Activated CD8-positive, alpha-beta memory T cell treated with anti-CD3 and anti-CD28 coated beads, Interleukin-2, amount 10 ng/mL, durations not matched to agents 7 days and 5 days (primary cell): ENCODE measurements at regions of chr5 and their contacts with region 1.

Region 1: GRCh38 chr5:177113566-177114424 is 19.8 kb upstream of the NSD1 start:
- DNase-seq: peak; percentile 86
- ATAC-seq: peak; percentile 60
- H3K4me3 Mint-ChIP-seq: no peak overlapping the region
- H3K27ac Mint-ChIP-seq: peak overlapping the region; percentile 60
- H3K4me1 Mint-ChIP-seq: peaks cover 30% of the 10 kb centered on the region
- H3K27me3 Mint-ChIP-seq: no peaks in the 10 kb centered on the region

Region 2: GRCh38 chr5:176995896-176996754 is 117.7 kb before region 1 on chr5:
- CTCF ChIA-PET with region 1: no interaction called
- DNase-seq: no peak
- ATAC-seq: peak; percentile 68
- H3K4me3 Mint-ChIP-seq: no peak overlapping the region
- H3K27ac Mint-ChIP-seq: peak overlapping the region; percentile 17
- H3K4me1 Mint-ChIP-seq: peaks cover 28% of the 10 kb centered on the region
- H3K27me3 Mint-ChIP-seq: no peaks in the 10 kb centered on the region

Region 3: DNA sequence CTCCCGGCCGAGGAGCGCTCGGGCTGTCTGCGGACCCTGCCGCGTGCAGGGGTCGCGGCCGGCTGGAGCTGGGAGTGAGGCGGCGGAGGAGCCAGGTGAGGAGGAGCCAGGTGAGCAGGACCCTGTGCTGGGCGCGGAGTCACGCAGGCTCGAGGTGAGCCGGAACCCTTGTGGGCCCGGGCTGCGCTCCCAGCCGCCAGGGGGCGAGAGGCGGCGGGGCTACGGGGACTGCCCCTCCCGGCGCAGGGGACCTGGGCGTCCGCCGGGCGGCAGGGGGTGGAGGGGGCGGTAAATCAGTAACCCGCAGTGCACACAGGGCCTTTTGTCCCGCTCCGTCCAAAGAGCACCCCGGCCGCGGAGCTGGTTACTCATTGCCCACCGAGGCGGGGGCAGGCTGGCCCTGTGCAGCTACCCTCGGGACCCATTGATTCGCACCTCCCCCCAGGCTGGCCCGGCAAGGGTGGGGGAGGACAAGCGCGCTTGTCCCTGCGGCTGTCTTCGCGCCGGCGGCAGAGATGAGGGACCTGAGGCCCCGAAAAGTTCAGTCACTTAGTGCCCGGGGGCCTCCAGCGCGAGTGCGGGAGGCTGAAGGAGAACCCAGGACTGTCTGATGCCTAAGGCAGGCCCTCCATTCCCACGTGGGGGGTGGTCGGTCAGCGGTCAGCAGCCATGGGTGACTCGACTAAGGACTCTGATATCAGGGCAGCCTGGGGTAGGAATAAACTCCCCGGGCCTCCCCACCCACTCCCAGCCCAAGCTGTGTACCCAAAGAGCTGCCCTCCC is 26.7 kb before region 1 on chr5:
- CTCF ChIA-PET with region 1: interaction called, 40 read pairs
- DNase-seq: peak; percentile 65
- ATAC-seq: peak; percentile 85
- H3K4me3 Mint-ChIP-seq: no peak overlapping the region
- H3K27ac Mint-ChIP-seq: no peak overlapping the region
- H3K4me1 Mint-ChIP-seq: peaks cover 9% of the 10 kb centered on the region
- H3K27me3 Mint-ChIP-seq: peaks cover 45% of the 10 kb centered on the region

Region 4: GRCh38 chr5:177133091-177133852 is 19.5 kb after region 1 on chr5 and contains the start of gene NSD1:
- CTCF ChIA-PET with region 1: interaction called, 52 read pairs
- DNase-seq: peak; percentile 94
- ATAC-seq: peak; percentile 78
- H3K4me3 Mint-ChIP-seq: peak within 1 kb of the TSS; percentile 88
- H3K27ac Mint-ChIP-seq: peak within 1 kb of the TSS; percentile 89
- H3K4me1 Mint-ChIP-seq: peaks cover 45% of the 10 kb centered on the region
- H3K27me3 Mint-ChIP-seq: no peaks in the 10 kb centered on the region
- total RNA-seq, gene NSD1: 94.6 to 114 TPM

Region 5: GRCh38 chr5:177303121-177303924 is 189.5 kb after region 1 on chr5 and contains the starts of genes PRELID1 and RAB24:
- CTCF ChIA-PET with region 1: interaction called, 79 read pairs
- DNase-seq: peak; percentile 91
- ATAC-seq: peak; percentile 57
- H3K4me3 Mint-ChIP-seq: peak within 1 kb of the TSS; percentile 89
- H3K27ac Mint-ChIP-seq: peak within 1 kb of the TSS; percentile 94
- H3K4me1 Mint-ChIP-seq: peaks cover 68% of the 10 kb centered on the region
- H3K27me3 Mint-ChIP-seq: no peaks in the 10 kb centered on the region
- total RNA-seq, gene PRELID1: 173 to 228 TPM
- total RNA-seq, gene RAB24: 40.5 to 50.8 TPM

Region 6: GRCh38 chr5:177390363-177391300 is 276.8 kb after region 1 on chr5:
- CTCF ChIA-PET with region 1: interaction called, 10 read pairs
- DNase-seq: peak; percentile 93
- ATAC-seq: peak; percentile 72
- H3K4me3 Mint-ChIP-seq: peak overlapping the region; percentile 37
- H3K27ac Mint-ChIP-seq: peak overlapping the region; percentile 88
- H3K4me1 Mint-ChIP-seq: peaks cover 47% of the 10 kb centered on the region
- H3K27me3 Mint-ChIP-seq: no peaks in the 10 kb centered on the region